ENCODE measurements at regions of chr5 and their contacts with region 1.

Region 1: GRCh38 chr5:139651853-139652787 is 4.0 kb downstream of the CXXC5 start:
- DNase-seq: peak; percentile 85 to 89 (median 86)
- ATAC-seq: peak; percentile 40
- H3K4me3 ChIP-seq: peak overlapping the region; percentile 90; the same call in 1 of the 2 replicates
- H3K27ac ChIP-seq: no peak overlapping the region
- H3K4me1 ChIP-seq: peaks cover 58 to 81% of the 10 kb centered on the region in 2 experiments
- H3K27me3 ChIP-seq: no peaks in the 10 kb centered on the region
- CTCF ChIP-seq: no peak
- EP300 ChIP-seq: no peak
- POLR2A ChIP-seq: no peak
- RAD21 ChIP-seq: no peak

Region 2: DNA sequence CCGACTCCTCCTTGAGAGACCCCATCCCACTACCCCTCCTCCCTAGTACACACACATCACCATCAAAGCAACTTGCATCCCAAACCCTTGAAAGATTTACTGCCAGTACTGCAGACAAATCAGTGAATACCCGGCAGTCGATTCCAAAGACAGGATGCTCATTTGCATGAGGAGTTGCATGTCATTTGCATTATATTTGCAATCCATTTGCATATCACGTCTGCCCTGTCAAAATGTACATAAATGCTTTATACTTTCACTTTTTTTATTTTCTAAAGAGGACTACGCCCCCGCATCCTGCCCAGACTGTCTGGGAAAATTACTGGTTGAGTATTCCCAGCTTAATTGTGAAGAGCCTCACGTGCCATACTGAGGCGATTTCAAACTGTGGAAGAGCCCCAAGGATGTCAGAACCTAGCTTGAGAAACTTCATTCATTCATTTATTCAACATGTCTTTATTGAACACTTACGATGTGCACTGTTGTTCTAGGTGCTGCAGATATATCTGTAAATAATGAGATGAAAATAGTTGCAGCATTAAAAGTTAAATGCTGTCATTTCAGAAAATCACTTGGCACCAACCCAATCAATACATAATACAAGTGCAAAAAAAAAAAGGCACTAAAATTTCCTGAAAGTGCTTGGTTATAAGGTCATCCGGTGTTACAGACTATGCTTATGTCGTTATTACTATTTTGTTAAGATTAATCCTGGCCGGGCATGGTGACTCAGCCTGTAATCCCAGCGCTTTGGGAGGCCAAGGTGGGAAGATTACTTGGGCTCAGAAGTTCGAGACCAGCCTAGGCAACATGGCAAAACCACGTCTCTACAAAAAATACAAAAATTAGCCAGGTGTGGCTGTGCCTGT is 436.8 kb before region 1 on chr5:
- CTCF ChIA-PET with region 1: no interaction called
- POLR2A ChIA-PET with region 1: no interaction called
- in situ Hi-C with region 1: no loop called
- intact Hi-C with region 1: no loop called
- DNase-seq: no peak
- ATAC-seq: no peak
- H3K4me3 ChIP-seq: no peak overlapping the region
- H3K27ac ChIP-seq: no peak overlapping the region
- H3K4me1 ChIP-seq: no peaks in the 10 kb centered on the region
- H3K27me3 ChIP-seq: 0 out of 5 replicates have a peak, but pooled peaks cover 0 to 6% of the 10 kb centered on the region in 2 experiments
- CTCF ChIP-seq: no peak
- EP300 ChIP-seq: no peak
- POLR2A ChIP-seq: no peak
- RAD21 ChIP-seq: no peak

Region 3: DNA sequence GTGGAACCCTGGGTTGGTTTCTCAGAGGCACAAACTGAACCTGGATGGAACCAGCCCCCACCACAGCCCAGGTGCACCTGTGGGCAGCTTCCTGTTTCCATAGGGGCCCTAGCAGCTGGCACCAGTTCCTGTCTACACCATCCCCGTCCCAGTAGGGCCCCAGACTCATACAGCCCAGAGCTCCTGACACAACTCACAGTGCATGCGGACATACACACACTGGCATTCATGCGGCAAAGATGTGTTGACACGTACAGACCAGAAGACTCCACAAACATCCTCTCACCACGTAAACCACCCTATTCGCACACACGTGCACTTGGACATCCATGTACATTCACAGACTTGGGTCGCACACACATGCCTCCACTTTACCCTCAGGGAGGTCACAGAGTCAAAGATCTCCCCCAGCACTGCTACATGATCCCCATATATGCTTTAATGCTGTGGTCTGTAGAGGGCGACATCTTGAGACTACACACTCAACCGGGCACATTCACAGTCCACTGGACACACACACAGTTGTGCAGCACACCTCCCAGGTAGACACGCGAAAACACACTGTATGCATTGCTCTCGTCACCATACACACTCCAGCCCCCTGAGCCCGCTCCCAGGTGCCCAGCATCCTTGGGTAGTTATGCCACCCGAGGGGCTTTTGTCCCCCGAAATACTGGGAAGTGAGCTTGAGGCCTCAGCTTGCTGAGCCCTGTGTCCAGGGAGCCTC is 18.4 kb after region 1 on chr5:
- CTCF ChIA-PET with region 1: no interaction called
- POLR2A ChIA-PET with region 1: interaction called, 33 read pairs
- in situ Hi-C with region 1: no loop called
- intact Hi-C with region 1: loop called (anchors 1 kb)
- DNase-seq: peak in 2 of 4 experiments; percentile 53 to 67
- ATAC-seq: peak; percentile 42
- H3K4me3 ChIP-seq: no peak overlapping the region; the same call in 1 of the 2 replicates
- H3K27ac ChIP-seq: peak overlapping the region; percentile 95
- H3K4me1 ChIP-seq: peaks cover 78 to 81% of the 10 kb centered on the region in 2 experiments
- H3K27me3 ChIP-seq: no peaks in the 10 kb centered on the region
- CTCF ChIP-seq: peak; percentile 58 to 70 (median 61)
- EP300 ChIP-seq: no peak
- POLR2A ChIP-seq: no peak
- RAD21 ChIP-seq: peak in 1 of 2 experiments; percentile 51; a peak in 2 of 4 replicates

Region 4: GRCh38 chr5:139690064-139690802 is 38.1 kb after region 1 on chr5:
- CTCF ChIA-PET with region 1: interaction called, 3 read pairs
- POLR2A ChIA-PET with region 1: interaction called, 3 read pairs
- in situ Hi-C with region 1: no loop called
- intact Hi-C with region 1: loop called (anchors 1 kb)
- DNase-seq: peak; percentile 60 to 85 (median 70)
- ATAC-seq: peak; percentile 70
- H3K4me3 ChIP-seq: no peak overlapping the region
- H3K27ac ChIP-seq: peak overlapping the region; percentile 29
- H3K4me1 ChIP-seq: peaks cover 38 to 60% of the 10 kb centered on the region in 2 experiments
- H3K27me3 ChIP-seq: no peaks in the 10 kb centered on the region; a peak in 1 of 5 replicates
- CTCF ChIP-seq: peak; percentile 53 to 63 (median 56); a peak in 5 of 6 replicates
- EP300 ChIP-seq: no peak
- POLR2A ChIP-seq: no peak
- RAD21 ChIP-seq: peak; percentile 55 to 73; a peak in 3 of 4 replicates

Region 5: GRCh38 chr5:139696894-139697658 is 45.0 kb after region 1 on chr5:
- CTCF ChIA-PET with region 1: no interaction called
- POLR2A ChIA-PET with region 1: interaction called, 7 read pairs
- in situ Hi-C with region 1: no loop called
- intact Hi-C with region 1: loop called (anchors 2 kb)
- DNase-seq: peak; percentile 92 to 94 (median 92)
- ATAC-seq: peak; percentile 85
- H3K4me3 ChIP-seq: peak overlapping the region; percentile 55
- H3K27ac ChIP-seq: peak overlapping the region; percentile 97
- H3K4me1 ChIP-seq: peaks cover 58 to 66% of the 10 kb centered on the region in 2 experiments
- H3K27me3 ChIP-seq: no peaks in the 10 kb centered on the region
- CTCF ChIP-seq: no peak
- EP300 ChIP-seq: peak; percentile 39
- POLR2A ChIP-seq: peak; percentile 87
- RAD21 ChIP-seq: no peak

Region 6: GRCh38 chr5:139711067-139711905 is 59.2 kb after region 1 on chr5:
- CTCF ChIA-PET with region 1: no interaction called
- POLR2A ChIA-PET with region 1: interaction called, 7 read pairs
- in situ Hi-C with region 1: no loop called
- intact Hi-C with region 1: loop called (anchors 2 kb)
- DNase-seq: peak; percentile 72 to 87 (median 80)
- ATAC-seq: peak; percentile 65
- H3K4me3 ChIP-seq: peak overlapping the region; percentile 57
- H3K27ac ChIP-seq: peak overlapping the region; percentile 81; the same call in 2 of the 3 replicates
- H3K4me1 ChIP-seq: peaks cover 40 to 50% of the 10 kb centered on the region in 2 experiments
- H3K27me3 ChIP-seq: no peaks in the 10 kb centered on the region
- CTCF ChIP-seq: peak; percentile 37 to 63 (median 54); a peak in 5 of 6 replicates
- EP300 ChIP-seq: no peak
- POLR2A ChIP-seq: no peak
- RAD21 ChIP-seq: peak in 1 of 2 experiments; percentile 58; a peak in 2 of 4 replicates